Caco-2 (cell line): ENCODE measurements at regions of chr4 and their contacts with region 1.

Region 1: DNA sequence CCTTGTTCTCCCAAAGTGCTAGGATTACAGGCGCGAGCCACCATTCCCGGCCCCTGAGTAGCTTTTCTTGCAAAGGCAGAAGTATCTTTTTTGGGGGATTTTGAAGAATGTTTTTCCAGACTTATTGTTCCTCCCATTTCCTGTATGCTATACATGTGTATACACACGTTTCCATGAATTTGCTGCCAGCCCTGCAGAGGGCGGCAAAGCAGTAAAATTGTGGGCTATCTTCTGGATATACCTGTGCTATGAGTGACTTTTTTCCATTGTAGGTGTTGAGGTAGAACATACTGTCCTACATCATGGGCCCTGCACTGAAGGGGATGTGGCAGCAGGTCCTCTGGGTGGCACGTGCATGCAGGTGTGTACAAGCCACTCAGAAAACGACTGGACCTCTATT is 16.9 kb upstream of the MED28 start:
- DNase-seq: peak in 1 of 2 experiments; percentile 62
- H3K4me3 ChIP-seq: no peak overlapping the region
- H3K4me3 Mint-ChIP-seq: no peak overlapping the region
- H3K27ac Mint-ChIP-seq: no peak overlapping the region
- H3K4me1 ChIP-seq: no peaks in the 10 kb centered on the region
- H3K4me1 Mint-ChIP-seq: no peaks in the 10 kb centered on the region
- H3K27me3 ChIP-seq: no peaks in the 10 kb centered on the region
- H3K27me3 Mint-ChIP-seq: no peaks in the 10 kb centered on the region
- CTCF ChIP-seq: peak in 1 of 2 experiments; percentile 62

Region 2: DNA sequence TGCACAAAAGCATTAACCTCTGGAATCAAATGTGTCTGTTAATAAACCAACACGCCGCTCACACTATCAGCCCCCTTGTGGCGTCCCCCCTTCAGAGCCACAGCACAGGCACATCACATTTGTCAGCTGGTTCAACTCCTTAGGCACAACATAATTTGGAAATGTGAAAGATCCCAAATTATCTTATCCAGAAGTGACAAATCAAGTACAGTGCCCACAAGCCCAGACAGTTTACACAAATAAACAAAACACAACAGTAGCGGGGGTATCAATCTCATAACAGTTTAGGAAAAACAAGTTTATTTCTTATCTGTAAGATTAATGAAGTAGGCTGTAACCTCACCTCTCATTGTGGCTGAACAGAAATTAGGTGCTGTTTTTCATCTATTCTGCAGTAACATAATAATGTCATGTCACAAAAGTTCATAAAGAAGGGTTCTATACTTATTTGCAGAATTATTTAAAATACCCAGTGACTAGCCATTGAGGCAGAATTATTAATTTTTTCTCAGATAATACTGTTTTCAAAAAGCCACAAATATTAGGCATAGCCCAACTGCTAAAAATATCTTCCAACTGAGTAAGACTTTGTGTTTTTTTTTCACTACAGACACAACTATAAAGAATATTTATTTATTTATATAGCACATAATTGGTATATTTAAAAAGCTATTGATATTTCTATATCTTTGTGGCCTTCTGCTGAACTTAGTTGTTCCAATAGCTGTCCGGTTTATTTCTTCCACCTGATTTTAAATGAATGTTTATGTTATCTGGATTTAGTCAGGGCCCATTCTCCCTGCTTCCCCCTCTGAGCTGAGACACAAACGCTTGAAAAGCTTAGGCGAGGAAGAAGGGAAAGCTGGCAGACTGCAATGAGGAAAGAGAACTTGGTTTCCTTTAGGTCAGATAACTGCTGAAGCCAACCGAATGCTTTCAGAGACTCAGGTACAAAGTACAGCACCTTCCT is 300.3 kb before region 1 on chr4:
- CTCF ChIA-PET with region 1: no interaction called
- POLR2A ChIA-PET with region 1: no interaction called
- intact Hi-C with region 1: no loop called
- DNase-seq: no peak
- H3K4me3 ChIP-seq: no peak overlapping the region
- H3K4me3 Mint-ChIP-seq: no peak overlapping the region
- H3K27ac Mint-ChIP-seq: no peak overlapping the region
- H3K4me1 ChIP-seq: no peaks in the 10 kb centered on the region
- H3K4me1 Mint-ChIP-seq: no peaks in the 10 kb centered on the region
- H3K27me3 ChIP-seq: no peaks in the 10 kb centered on the region
- H3K27me3 Mint-ChIP-seq: peaks cover 2% of the 10 kb centered on the region
- CTCF ChIP-seq: no peak

Region 3: DNA sequence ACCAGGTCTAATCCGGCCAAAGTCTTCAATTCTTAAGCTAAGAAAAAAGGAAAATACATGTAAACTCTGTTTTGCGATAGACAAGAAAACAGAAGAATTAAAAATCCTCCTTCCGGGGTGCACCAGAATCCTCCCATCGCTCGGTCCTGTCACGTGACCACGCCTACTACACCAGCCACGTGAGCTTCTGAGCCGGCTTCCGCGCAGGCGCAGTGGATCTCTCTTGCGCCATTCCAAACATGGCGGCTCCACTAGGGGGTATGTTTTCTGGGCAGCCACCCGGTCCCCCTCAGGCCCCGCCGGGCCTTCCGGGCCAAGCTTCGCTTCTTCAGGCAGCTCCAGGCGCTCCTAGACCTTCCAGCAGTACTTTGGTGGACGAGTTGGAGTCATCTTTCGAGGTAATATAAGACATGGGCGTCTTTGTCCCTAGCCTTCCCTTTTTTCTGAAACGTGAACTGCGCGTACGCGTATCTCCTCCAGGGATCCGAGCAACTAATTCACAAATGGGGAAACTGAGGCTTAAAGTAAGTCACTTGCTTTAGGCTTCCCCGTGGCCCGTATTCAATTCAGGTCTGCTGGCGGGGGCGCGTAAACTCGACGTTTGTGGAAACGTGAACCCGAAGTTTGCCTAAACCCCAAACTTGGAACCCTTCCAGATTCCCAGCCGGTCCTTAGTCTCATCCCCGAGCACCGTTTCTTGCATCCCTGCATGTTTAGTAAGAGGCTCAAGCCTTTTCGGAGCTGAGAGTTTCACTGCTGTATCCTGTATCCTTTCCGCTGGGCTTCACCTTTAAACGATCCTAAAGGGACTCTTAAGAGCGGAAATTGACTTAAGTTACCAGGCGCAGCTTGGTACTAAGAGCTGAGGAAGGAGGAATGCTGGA is 17.1 kb after region 1 on chr4 and contains the start of gene MED28:
- CTCF ChIA-PET with region 1: no interaction called
- POLR2A ChIA-PET with region 1: no interaction called
- intact Hi-C with region 1: loop called (anchors 1 kb)
- DNase-seq: peak; percentile 92 to 93
- H3K4me3 ChIP-seq: peak within 1 kb of the TSS; percentile 85
- H3K4me3 Mint-ChIP-seq: peak within 1 kb of the TSS; percentile 97
- H3K27ac Mint-ChIP-seq: peak within 1 kb of the TSS; percentile 98
- H3K4me1 ChIP-seq: peaks cover 7% of the 10 kb centered on the region; the same call in 1 of the 2 replicates
- H3K4me1 Mint-ChIP-seq: no peaks in the 10 kb centered on the region
- H3K27me3 ChIP-seq: no peaks in the 10 kb centered on the region
- H3K27me3 Mint-ChIP-seq: no peaks in the 10 kb centered on the region
- CTCF ChIP-seq: no peak
- total RNA-seq, gene MED28: 60.5 and 68.0 TPM in 2 replicates

Region 4: DNA sequence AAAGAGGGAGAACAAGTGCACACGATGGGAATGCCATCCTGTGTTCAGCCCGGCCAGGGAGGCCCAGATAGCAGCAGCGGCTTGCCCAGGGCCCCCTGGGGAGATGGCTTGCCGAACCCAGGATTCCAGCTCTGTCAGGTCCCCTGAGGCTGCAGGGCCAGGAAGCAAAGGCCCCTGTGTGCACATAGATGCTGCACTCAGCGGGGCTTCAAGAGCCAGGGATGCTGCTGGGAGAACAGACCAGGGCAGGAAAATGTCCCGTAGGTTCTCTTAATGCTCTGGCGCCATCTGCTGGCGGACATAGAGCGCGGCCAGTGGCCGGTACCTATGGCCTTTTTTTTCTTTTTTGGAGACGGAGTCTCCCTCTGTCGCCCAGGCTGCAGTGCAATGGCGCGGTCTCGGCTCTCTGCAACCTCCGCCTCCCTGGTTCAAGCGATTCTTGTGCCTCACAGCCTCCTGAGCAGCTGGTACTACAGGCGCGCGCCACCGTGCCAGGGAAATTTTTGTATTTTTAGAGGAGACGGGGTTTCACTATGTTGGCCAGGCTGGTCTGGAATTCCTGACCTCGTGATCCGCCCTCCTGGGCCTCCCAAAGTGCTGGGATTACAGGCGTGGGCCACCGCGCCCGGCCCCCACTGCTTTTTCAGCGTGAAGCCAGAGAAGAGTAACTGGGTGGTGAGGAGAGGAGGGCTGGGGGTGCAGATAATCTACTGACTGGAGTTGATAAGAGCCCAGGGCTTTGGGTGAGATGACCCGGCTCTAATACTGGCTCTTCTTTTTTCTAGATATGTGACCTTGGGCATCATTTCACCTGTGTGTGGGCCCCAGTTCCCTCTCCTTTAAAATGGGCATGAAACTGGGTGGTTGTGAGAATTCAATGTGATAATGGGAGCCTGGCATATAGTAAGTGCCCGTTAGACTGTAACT is 39.4 kb after region 1 on chr4:
- CTCF ChIA-PET with region 1: no interaction called
- POLR2A ChIA-PET with region 1: no interaction called
- intact Hi-C with region 1: loop called (anchors 1 kb)
- DNase-seq: peak; percentile 73 to 78
- H3K4me3 ChIP-seq: no peak overlapping the region
- H3K4me3 Mint-ChIP-seq: no peak overlapping the region
- H3K27ac Mint-ChIP-seq: no peak overlapping the region
- H3K4me1 ChIP-seq: no peaks in the 10 kb centered on the region
- H3K4me1 Mint-ChIP-seq: no peaks in the 10 kb centered on the region
- H3K27me3 ChIP-seq: no peaks in the 10 kb centered on the region
- H3K27me3 Mint-ChIP-seq: no peaks in the 10 kb centered on the region
- CTCF ChIP-seq: peak; percentile 83 to 90

Region 5: DNA sequence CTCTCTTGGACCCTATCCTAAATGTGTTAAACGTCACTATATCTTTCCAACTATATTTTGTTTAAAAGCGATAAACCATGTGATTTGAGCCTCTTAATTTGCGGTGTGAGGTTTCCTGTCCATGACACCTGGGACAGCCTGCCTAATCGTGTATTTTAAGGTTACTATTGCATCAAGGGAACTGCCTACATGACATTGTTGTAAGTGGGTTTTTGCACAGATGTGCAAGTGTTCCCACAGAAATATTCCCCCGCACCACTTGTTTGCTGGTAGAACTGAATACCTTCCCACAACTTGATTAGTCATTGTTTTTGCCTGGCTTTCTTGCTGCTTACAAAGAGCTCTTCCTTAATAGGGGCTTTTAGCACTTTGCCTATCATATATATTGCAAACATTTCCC is 189.1 kb after region 1 on chr4:
- CTCF ChIA-PET with region 1: no interaction called
- POLR2A ChIA-PET with region 1: no interaction called
- intact Hi-C with region 1: loop called (anchors 1 kb)
- DNase-seq: no peak
- H3K4me3 ChIP-seq: no peak overlapping the region
- H3K4me3 Mint-ChIP-seq: no peak overlapping the region
- H3K27ac Mint-ChIP-seq: no peak overlapping the region
- H3K4me1 ChIP-seq: no peaks in the 10 kb centered on the region
- H3K4me1 Mint-ChIP-seq: no peaks in the 10 kb centered on the region
- H3K27me3 ChIP-seq: no peaks in the 10 kb centered on the region
- H3K27me3 Mint-ChIP-seq: no peaks in the 10 kb centered on the region
- CTCF ChIP-seq: no peak

Region 6: GRCh38 chr4:17810260-17811077 is 213.0 kb after region 1 on chr4 and contains the starts of genes DCAF16 and NCAPG:
- CTCF ChIA-PET with region 1: no interaction called
- POLR2A ChIA-PET with region 1: no interaction called
- intact Hi-C with region 1: loop called (anchors 5 kb)
- DNase-seq: peak; percentile 99
- H3K4me3 ChIP-seq: peak within 1 kb of the TSS; percentile 94
- H3K4me3 Mint-ChIP-seq: peak within 1 kb of the TSS; percentile 90
- H3K27ac Mint-ChIP-seq: peak within 1 kb of the TSS; percentile 95
- H3K4me1 ChIP-seq: peaks cover 5% of the 10 kb centered on the region; the same call in 1 of the 2 replicates
- H3K4me1 Mint-ChIP-seq: peaks cover 24% of the 10 kb centered on the region
- H3K27me3 ChIP-seq: no peaks in the 10 kb centered on the region
- H3K27me3 Mint-ChIP-seq: no peaks in the 10 kb centered on the region
- CTCF ChIP-seq: no peak
- total RNA-seq, gene DCAF16: 52.3 and 55.3 TPM in 2 replicates
- total RNA-seq, gene NCAPG: 48.9 and 54.0 TPM in 2 replicates